ENCODE measurements at regions of chr5 and their contacts with region 1.

Region 1: GRCh38 chr5:168579488-168580226 is 489 bp upstream of the PANK3 start:
- DNase-seq: peak; percentile 97 to 99
- ATAC-seq: peak; percentile 98 to 99 (median 99)
- H3K4me3 ChIP-seq: peak overlapping the region; percentile 76 to 99 (median 92)
- H3K27ac ChIP-seq: peak overlapping the region; percentile 89 to 99 (median 96)
- H3K4me1 ChIP-seq: peaks cover 0 to 47% (median 37%) of the 10 kb centered on the region in 9 donors
- H3K27me3 ChIP-seq: no peaks in the 10 kb centered on the region
- CTCF ChIP-seq: no peak

Region 2: DNA sequence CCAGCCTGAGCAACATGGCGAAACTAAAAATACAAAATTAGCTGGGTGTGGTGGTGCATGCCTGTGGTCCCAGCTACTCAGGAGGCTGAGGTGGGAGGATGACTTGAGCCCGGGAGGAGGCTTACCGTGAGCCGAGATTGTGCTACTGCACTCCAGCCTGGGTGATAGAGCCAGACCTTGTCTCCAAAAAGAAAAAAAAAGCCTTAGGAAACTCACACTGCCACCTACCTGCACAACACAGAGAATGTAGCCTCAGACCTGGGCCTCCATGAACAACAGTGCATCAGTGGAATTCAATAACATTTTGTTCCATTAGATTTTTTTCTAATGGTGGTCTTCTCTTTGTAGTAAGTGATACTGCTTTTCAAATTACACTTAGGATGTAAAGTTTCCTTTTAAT is 157.2 kb before region 1 on chr5:
- intact Hi-C with region 1: no loop called
- DNase-seq: no peak
- ATAC-seq: no peak
- H3K4me3 ChIP-seq: no peak overlapping the region
- H3K27ac ChIP-seq: no peak overlapping the region
- H3K4me1 ChIP-seq: peaks cover 0 to 8% (median 0%) of the 10 kb centered on the region in 9 donors
- H3K27me3 ChIP-seq: no peaks in the 10 kb centered on the region
- CTCF ChIP-seq: no peak

Region 3: GRCh38 chr5:168486136-168486879 is 93.3 kb before region 1 on chr5 and contains the start of gene RARS1:
- intact Hi-C with region 1: loop called in 6 of 10 experiments (anchors 2 to 10 kb)
- DNase-seq: peak; percentile 93 to 94
- ATAC-seq: peak; percentile 99 to 100 (median 99)
- H3K4me3 ChIP-seq: peak within 1 kb of the TSS; percentile 68 to 100 (median 93)
- H3K27ac ChIP-seq: peak within 1 kb of the TSS in 9 of 10 donors; percentile 71 to 89 (median 80)
- H3K4me1 ChIP-seq: peaks cover 0 to 20% (median 9%) of the 10 kb centered on the region in 9 donors
- H3K27me3 ChIP-seq: peaks cover 0 to 8% (median 0%) of the 10 kb centered on the region in 7 donors
- CTCF ChIP-seq: peak in 8 of 9 donors; percentile 89 to 99 (median 98)
- total RNA-seq, gene RARS1: 43.7 to 52.5 (median 46.0) TPM

Region 4: GRCh38 chr5:168781941-168782571 is 202.4 kb after region 1 on chr5:
- intact Hi-C with region 1: no loop called
- DNase-seq: no peak
- ATAC-seq: no peak
- H3K4me3 ChIP-seq: no peak overlapping the region
- H3K27ac ChIP-seq: no peak overlapping the region
- H3K4me1 ChIP-seq: no peaks in the 10 kb centered on the region
- H3K27me3 ChIP-seq: no peaks in the 10 kb centered on the region
- CTCF ChIP-seq: no peak

Region 5: GRCh38 chr5:168851902-168852321 is 272.3 kb after region 1 on chr5:
- intact Hi-C with region 1: no loop called
- DNase-seq: peak in 1 of 2 donors; percentile 15
- ATAC-seq: peak in 5 of 8 donors; percentile 37 to 75 (median 68)
- H3K4me3 ChIP-seq: no peak overlapping the region
- H3K27ac ChIP-seq: no peak overlapping the region
- H3K4me1 ChIP-seq: peaks cover 0 to 14% (median 0%) of the 10 kb centered on the region in 9 donors
- H3K27me3 ChIP-seq: no peaks in the 10 kb centered on the region
- CTCF ChIP-seq: no peak

Region 6: DNA sequence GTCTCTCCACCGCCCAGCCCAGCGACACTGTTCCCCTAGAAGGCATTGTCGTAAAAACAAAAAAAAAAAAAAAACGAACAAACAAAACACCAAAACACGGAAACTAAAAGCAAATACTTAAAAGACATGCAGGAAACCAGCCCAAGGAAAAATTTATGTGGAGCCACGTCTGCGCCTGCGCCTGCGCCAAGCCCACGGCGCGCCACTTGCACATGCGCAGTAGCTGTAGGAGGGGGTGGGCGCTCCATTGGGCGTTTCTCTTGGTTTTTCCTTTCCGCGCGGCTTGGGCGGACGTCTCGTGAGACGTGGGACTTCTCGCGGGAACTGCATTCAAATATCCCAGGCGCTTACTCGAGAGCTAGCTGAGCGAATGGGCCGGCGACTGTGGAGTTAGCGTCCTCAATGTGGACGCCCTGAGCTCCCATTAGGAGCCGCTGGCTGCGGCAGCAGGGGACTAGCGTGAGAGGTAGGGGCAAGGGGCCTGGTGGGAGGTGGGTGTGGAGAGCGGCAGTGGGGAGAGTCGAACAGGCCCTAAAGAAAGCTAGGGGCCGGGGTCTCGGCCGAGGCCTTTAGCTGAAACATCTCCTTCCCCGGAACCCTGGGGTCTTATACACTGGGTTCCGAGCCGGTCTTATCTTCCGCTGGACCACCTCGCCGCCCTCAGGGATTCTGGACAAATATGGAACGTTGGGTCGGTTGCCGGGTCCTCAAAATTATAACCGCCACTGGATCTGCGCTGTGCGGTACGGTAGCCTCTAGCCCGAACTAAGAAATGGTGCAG is 1004.0 kb after region 1 on chr5 and contains the start of gene SPDL1:
- intact Hi-C with region 1: loop called in 1 of 10 experiments (anchors 5 kb)
- DNase-seq: peak; percentile 95 to 96
- ATAC-seq: peak; percentile 95 to 99 (median 98)
- H3K4me3 ChIP-seq: peak within 1 kb of the TSS; percentile 62 to 91 (median 82)
- H3K27ac ChIP-seq: peak within 1 kb of the TSS in 9 of 10 donors; percentile 48 to 84 (median 73)
- H3K4me1 ChIP-seq: peaks cover 0 to 17% (median 11%) of the 10 kb centered on the region in 9 donors
- H3K27me3 ChIP-seq: peaks cover 0 to 10% (median 0%) of the 10 kb centered on the region in 7 donors
- CTCF ChIP-seq: no peak
- total RNA-seq, gene SPDL1: 2.9 to 5.7 (median 4.2) TPM

Region 7: GRCh38 chr5:170312666-170313065 is 1733.0 kb after region 1 on chr5:
- intact Hi-C with region 1: loop called in 1 of 10 experiments (anchors 5 kb)
- DNase-seq: no peak
- ATAC-seq: peak in 5 of 8 donors; percentile 1 to 23 (median 11)
- H3K4me3 ChIP-seq: peak overlapping the region in 1 of 10 donors; percentile 10
- H3K27ac ChIP-seq: peak overlapping the region in 1 of 10 donors; percentile 83
- H3K4me1 ChIP-seq: peaks cover 9 to 78% (median 25%) of the 10 kb centered on the region in 9 donors
- H3K27me3 ChIP-seq: no peaks in the 10 kb centered on the region
- CTCF ChIP-seq: no peak

Measured in heart right ventricle (tissue), 16 donors.